Esophagus muscularis mucosa (tissue), 4 donors: ENCODE measurements at regions of chr7 and their contacts with region 1.

Region 1: GRCh38 chr7:106176414-106177299 is 64.5 kb upstream of the SYPL1 start:
- DNase-seq: peak; percentile 96
- H3K4me3 ChIP-seq: no peak overlapping the region
- H3K27ac ChIP-seq: peak overlapping the region in 1 of 4 donors; percentile 15
- H3K4me1 ChIP-seq: peaks cover 13 to 36% (median 16%) of the 10 kb centered on the region in 4 donors
- H3K27me3 ChIP-seq: no peaks in the 10 kb centered on the region
- CTCF ChIP-seq: peak; percentile 96 to 98 (median 97)
- EP300 ChIP-seq: no peak
- POLR2A ChIP-seq: no peak

Region 2: DNA sequence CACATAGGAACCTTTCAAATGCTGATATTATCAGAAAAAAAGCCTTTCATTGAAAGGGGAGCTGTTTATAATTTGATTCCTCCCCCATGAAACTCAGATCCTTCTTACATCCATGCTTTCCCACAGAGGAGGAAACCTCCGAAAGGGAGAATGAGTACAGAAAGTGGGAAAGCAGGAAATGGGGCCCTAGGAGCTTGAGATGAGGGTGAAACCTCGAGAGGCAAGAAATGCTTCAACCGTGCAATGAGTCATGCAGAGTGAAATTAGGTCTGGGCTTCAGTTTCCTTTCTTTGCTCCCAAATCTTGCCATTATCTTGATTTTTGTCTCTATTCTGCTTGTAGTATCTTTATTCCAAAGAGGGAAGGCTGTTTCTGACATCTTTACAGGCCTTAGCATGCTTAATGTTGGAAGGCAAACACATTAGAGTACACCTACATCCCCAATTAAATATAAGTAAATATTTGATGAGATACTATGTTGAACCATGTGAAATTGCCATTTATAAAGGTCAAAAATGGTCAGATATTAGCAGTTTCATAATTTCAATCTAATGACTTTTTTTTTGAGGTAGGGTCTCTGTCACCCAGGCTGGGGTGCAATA is 29.1 kb after region 1 on chr7:
- intact Hi-C with region 1: no loop called
- DNase-seq: no peak
- H3K4me3 ChIP-seq: no peak overlapping the region
- H3K27ac ChIP-seq: no peak overlapping the region
- H3K4me1 ChIP-seq: no peaks in the 10 kb centered on the region
- H3K27me3 ChIP-seq: no peaks in the 10 kb centered on the region
- CTCF ChIP-seq: no peak
- EP300 ChIP-seq: no peak
- POLR2A ChIP-seq: no peak

Region 3: GRCh38 chr7:106461993-106462859 is 285.6 kb after region 1 on chr7:
- intact Hi-C with region 1: loop called (anchors 1 kb)
- DNase-seq: no peak
- H3K4me3 ChIP-seq: no peak overlapping the region
- H3K27ac ChIP-seq: no peak overlapping the region
- H3K4me1 ChIP-seq: peaks cover 10 to 43% (median 41%) of the 10 kb centered on the region in 4 donors
- H3K27me3 ChIP-seq: no peaks in the 10 kb centered on the region
- CTCF ChIP-seq: peak; percentile 53 to 74 (median 71)
- EP300 ChIP-seq: no peak
- POLR2A ChIP-seq: no peak